Cardiac septum (tissue), 1 donor: ENCODE measurements at regions of chr2 and their contacts with region 1.

Region 1: GRCh38 chr2:168758970-168759820 is 43.2 kb upstream of the NOSTRIN start:
- DNase-seq: no peak

Region 2: GRCh38 chr2:168346725-168347477 is 412.3 kb before region 1 on chr2:
- intact Hi-C with region 1: loop called (anchors 1 kb)
- DNase-seq: no peak

Region 3: DNA sequence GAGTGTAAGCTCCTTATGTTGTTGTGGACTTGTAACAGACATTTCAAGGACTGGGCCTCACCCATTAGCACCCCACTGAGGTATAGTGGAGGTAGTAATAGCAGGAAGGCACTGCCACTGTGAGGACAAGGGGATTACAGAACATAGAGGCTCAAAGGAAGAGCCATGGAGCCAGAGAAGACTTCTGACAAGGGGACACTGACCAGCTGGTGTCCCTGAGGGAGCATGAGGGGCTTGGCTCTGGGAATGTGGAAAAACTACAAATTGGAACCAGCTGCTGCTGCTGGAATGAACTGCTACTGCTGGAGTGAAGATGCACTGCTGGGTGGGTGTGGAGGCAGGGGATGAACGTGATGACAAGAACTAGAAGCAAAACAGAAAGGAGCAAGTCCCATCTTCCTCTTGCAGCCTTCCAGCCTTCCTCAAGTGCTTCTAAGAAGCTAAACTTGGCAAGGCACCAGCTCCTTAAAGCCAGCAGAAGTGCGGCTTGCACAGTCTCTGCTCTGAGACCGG is 124.1 kb before region 1 on chr2:
- intact Hi-C with region 1: loop called (anchors 5 kb)
- DNase-seq: no peak

Region 4: GRCh38 chr2:168722592-168722991 is 36.6 kb before region 1 on chr2:
- intact Hi-C with region 1: loop called (anchors 5 kb)
- DNase-seq: no peak